Mammary epithelial cell (primary cell): ENCODE measurements at regions of chr1 and their contacts with region 1.

Region 1: GRCh38 chr1:151059078-151059907 is at the start of gene CDC42SE1:
- DNase-seq: peak; percentile 76
- H3K4me3 ChIP-seq: peak within 1 kb of the TSS; percentile 81 to 99 (median 81)
- H3K27ac ChIP-seq: peak within 1 kb of the TSS; percentile 73
- H3K4me1 ChIP-seq: peaks cover 37% of the 10 kb centered on the region
- H3K27me3 ChIP-seq: no peaks in the 10 kb centered on the region
- CTCF ChIP-seq: peak; percentile 61 to 83
- total RNA-seq, gene CDC42SE1: 112 to 160 TPM

Region 2: GRCh38 chr1:150961799-150962198 is 97.5 kb before region 1 on chr1:
- CTCF ChIA-PET with region 1: interaction called, 12 read pairs
- dilution Hi-C with region 1: no loop called
- in situ Hi-C with region 1: no loop called
- intact Hi-C with region 1: no loop called
- DNase-seq: no peak
- H3K4me3 ChIP-seq: no peak overlapping the region
- H3K27ac ChIP-seq: no peak overlapping the region
- H3K4me1 ChIP-seq: no peaks in the 10 kb centered on the region
- H3K27me3 ChIP-seq: no peaks in the 10 kb centered on the region
- CTCF ChIP-seq: no peak

Region 3: GRCh38 chr1:151008190-151008860 is 51.0 kb before region 1 on chr1 and contains the start of gene PRUNE1:
- CTCF ChIA-PET with region 1: no interaction called
- dilution Hi-C with region 1: loop called (anchors 5 kb)
- in situ Hi-C with region 1: no loop called
- intact Hi-C with region 1: loop called (anchors 2 kb)
- DNase-seq: peak; percentile 93
- H3K4me3 ChIP-seq: peak within 1 kb of the TSS; percentile 78 to 93 (median 80)
- H3K27ac ChIP-seq: peak within 1 kb of the TSS; percentile 97
- H3K4me1 ChIP-seq: peaks cover 47% of the 10 kb centered on the region
- H3K27me3 ChIP-seq: no peaks in the 10 kb centered on the region
- CTCF ChIP-seq: no peak
- total RNA-seq, gene PRUNE1: 9.4 to 16.3 TPM

Region 4: DNA sequence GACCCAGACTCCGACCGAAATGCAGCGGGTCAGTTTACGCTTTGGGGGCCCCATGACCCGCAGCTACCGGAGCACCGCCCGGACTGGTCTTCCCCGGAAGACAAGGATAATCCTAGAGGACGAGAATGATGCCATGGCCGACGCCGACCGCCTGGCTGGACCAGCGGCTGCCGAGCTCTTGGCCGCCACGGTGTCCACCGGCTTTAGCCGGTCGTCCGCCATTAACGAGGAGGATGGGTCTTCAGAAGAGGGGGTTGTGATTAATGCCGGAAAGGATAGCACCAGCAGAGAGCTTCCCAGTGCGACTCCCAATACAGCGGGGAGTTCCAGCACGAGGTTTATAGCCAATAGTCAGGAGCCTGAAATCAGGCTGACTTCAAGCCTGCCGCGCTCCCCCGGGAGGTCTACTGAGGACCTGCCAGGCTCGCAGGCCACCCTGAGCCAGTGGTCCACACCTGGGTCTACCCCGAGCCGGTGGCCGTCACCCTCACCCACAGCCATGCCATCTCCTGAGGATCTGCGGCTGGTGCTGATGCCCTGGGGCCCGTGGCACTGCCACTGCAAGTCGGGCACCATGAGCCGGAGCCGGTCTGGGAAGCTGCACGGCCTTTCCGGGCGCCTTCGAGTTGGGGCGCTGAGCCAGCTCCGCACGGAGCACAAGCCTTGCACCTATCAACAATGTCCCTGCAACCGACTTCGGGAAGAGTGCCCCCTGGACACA is 11.2 kb before region 1 on chr1:
- CTCF ChIA-PET with region 1: interaction called, 6 read pairs
- dilution Hi-C with region 1: no loop called
- in situ Hi-C with region 1: no loop called
- intact Hi-C with region 1: loop called (anchors 1 kb)
- DNase-seq: peak; percentile 53
- H3K4me3 ChIP-seq: peak overlapping the region; percentile 44 to 59 (median 55)
- H3K27ac ChIP-seq: peak overlapping the region; percentile 18
- H3K4me1 ChIP-seq: peaks cover 18% of the 10 kb centered on the region
- H3K27me3 ChIP-seq: no peaks in the 10 kb centered on the region
- CTCF ChIP-seq: peak; percentile 32 to 56

Region 5: DNA sequence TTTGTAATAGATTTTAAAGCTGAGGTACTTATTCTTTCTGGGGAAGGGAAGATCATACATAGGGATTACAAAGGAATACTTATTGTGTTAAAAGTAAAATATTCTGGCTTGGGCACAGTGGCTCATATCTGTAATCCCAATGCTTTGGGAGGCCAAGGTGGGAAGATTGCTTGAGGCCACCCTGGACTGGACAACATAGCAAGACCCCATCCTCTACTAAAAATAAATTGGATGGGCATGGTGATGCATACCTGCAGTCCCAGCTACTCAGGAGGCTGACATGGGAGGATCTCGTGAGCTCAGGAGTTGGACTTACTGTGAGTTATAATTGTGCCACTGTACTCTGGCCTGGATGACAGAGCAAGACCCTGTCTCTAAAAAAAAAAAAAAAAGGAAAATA is 38.8 kb after region 1 on chr1:
- CTCF ChIA-PET with region 1: interaction called, 10 read pairs
- dilution Hi-C with region 1: no loop called
- in situ Hi-C with region 1: no loop called
- intact Hi-C with region 1: no loop called
- DNase-seq: no peak
- H3K4me3 ChIP-seq: no peak overlapping the region
- H3K27ac ChIP-seq: no peak overlapping the region
- H3K4me1 ChIP-seq: peaks cover 2% of the 10 kb centered on the region
- H3K27me3 ChIP-seq: no peaks in the 10 kb centered on the region
- CTCF ChIP-seq: no peak